Dorsolateral prefrontal cortex (tissue), 120 donors: ENCODE measurements at regions of chr1 and their contacts with region 1.

Region 1: DNA sequence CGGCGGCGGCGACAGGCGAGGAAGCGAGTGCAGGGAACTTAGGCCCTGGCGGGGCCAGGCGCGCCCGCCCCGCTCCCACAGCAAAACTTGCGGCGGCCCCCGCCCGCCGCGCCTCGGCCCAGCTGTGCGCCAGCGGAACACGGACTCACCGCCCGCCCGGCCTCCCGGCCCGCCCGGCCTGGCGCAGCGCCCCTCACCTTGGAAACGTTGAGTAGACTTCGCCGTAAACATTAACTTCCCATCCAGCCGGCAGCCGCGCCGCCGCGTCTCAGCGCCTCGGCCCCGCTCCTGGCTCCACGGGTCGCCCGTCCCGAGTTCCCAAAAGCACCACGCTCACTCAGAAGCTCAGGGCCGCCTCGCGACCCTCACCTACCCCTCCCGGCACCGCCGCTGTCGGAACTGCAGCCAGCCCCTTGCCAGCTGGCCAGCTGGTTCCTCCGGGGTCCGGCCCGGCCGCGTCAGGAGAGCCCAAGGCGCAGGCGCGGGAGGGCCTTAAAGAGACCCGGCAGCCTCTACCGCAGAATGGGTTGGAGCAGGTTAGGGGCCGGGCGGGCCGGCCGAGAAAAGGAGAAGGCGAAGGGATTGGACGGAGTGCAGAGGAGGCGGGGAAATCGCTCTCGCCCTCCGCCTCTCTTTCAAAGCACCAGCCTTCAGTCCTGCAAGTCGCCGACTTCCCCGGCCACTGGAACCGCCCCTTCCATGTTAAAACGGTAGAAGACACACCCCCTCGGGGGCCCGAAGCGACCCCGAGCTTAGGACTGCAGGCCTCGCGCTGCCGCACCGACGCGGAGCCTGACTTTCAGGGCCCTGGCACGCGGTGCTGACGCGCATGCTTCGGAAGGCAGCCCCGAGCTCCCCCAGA is at the start of gene EVI5:
- DNase-seq: peak; percentile 75 to 93 (median 88)
- H3K4me3 ChIP-seq: peak within 1 kb of the TSS; percentile 67 to 97 (median 89)
- H3K27ac ChIP-seq: peak within 1 kb of the TSS; percentile 73 to 97 (median 92)
- H3K27me3 ChIP-seq: no peaks in the 10 kb centered on the region
- CTCF ChIP-seq: peak in 32 of 56 donors; percentile 5 to 52 (median 32)
- total RNA-seq, gene EVI5: 37.6 to 71.9 (median 55.0) TPM

Region 2: GRCh38 chr1:92755541-92756461 is 29.1 kb before region 1 on chr1:
- intact Hi-C with region 1: no loop called
- DNase-seq: peak; percentile 40 to 79 (median 64)
- H3K4me3 ChIP-seq: peak overlapping the region in 54 of 59 donors; percentile 6 to 60 (median 29)
- H3K27ac ChIP-seq: peak overlapping the region in 57 of 59 donors; percentile 8 to 87 (median 73)
- H3K27me3 ChIP-seq: no peaks in the 10 kb centered on the region
- CTCF ChIP-seq: peak in 2 of 56 donors; percentile 10 to 13

Region 3: GRCh38 chr1:92817986-92818764 is 33.3 kb after region 1 on chr1:
- intact Hi-C with region 1: loop called in 1 of 2 experiments (anchors 5 kb)
- DNase-seq: no peak
- H3K4me3 ChIP-seq: no peak overlapping the region
- H3K27ac ChIP-seq: no peak overlapping the region
- H3K27me3 ChIP-seq: no peaks in the 10 kb centered on the region
- CTCF ChIP-seq: peak; percentile 23 to 73 (median 57)